ENCODE measurements at regions of chr4 and their contacts with region 1.

Region 1: GRCh38 chr4:55444827-55445226 is 49.1 kb downstream of the TMEM165 start:
- DNase-seq: peak; percentile 12
- H3K4me3 Mint-ChIP-seq: no peak overlapping the region
- H3K27ac Mint-ChIP-seq: no peak overlapping the region
- H3K4me1 Mint-ChIP-seq: peaks cover 7% of the 10 kb centered on the region
- H3K27me3 Mint-ChIP-seq: no peaks in the 10 kb centered on the region

Region 2: GRCh38 chr4:54958236-54958635 is 486.6 kb before region 1 on chr4:
- CTCF ChIA-PET with region 1: no interaction called
- intact Hi-C with region 1: no loop called
- DNase-seq: peak; percentile 40
- H3K4me3 Mint-ChIP-seq: no peak overlapping the region
- H3K27ac Mint-ChIP-seq: no peak overlapping the region
- H3K4me1 Mint-ChIP-seq: peaks cover 26% of the 10 kb centered on the region
- H3K27me3 Mint-ChIP-seq: no peaks in the 10 kb centered on the region

Region 3: GRCh38 chr4:55635741-55636655 is 191.2 kb after region 1 on chr4 and contains the start of gene NMU:
- CTCF ChIA-PET with region 1: interaction called, 3 read pairs
- intact Hi-C with region 1: loop called (anchors 1 kb)
- DNase-seq: peak; percentile 58
- H3K4me3 Mint-ChIP-seq: peak within 1 kb of the TSS; percentile 69
- H3K27ac Mint-ChIP-seq: no peak within 1 kb of the TSS
- H3K4me1 Mint-ChIP-seq: peaks cover 15% of the 10 kb centered on the region
- H3K27me3 Mint-ChIP-seq: peaks cover 51% of the 10 kb centered on the region
- total RNA-seq, gene NMU: not detected

Region 4: DNA sequence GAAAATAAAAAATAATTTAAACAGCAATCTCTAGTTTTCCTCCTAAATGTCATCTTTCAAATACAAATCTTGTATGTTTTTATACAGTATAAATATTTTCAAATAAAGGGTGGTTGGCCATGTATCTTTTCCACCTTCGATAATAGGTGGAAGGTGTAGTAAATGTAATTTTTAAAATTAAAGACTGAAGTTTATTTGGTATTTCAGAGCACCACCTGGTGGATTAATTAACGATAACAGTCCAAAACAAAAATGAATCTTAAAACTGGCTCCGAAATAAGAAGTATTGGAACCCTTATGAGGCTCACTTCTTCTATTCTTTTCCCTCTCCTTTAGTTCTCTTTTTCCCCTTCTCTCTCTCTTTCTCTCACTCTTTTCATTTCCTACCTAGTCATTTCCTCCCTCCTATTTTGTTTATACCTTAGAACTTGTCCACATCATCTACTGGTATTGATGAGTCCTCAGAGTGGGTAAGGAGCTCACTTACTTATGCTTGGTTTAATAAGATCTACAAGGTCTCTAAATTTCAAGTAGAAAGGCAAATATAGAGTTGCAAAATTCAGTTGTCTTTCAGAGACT is 291.9 kb after region 1 on chr4:
- CTCF ChIA-PET with region 1: no interaction called
- intact Hi-C with region 1: loop called (anchors 5 kb)
- DNase-seq: no peak
- H3K4me3 Mint-ChIP-seq: no peak overlapping the region
- H3K27ac Mint-ChIP-seq: no peak overlapping the region
- H3K4me1 Mint-ChIP-seq: no peaks in the 10 kb centered on the region
- H3K27me3 Mint-ChIP-seq: peaks cover 34% of the 10 kb centered on the region

Measured in activated naive CD4-positive, alpha-beta T cell treated with anti-CD3 and anti-CD28 coated beads for 36 hours (primary cell).